B cell (primary cell): ENCODE measurements at regions of chr6 and their contacts with region 1.

Region 1: GRCh38 chr6:73285674-73286283 is 22.8 kb upstream of the KHDC1 start:
- DNase-seq: peak; percentile 13
- ATAC-seq: no peak
- H3K4me3 ChIP-seq: no peak overlapping the region
- H3K4me3 Mint-ChIP-seq: no peak overlapping the region
- H3K27ac ChIP-seq: no peak overlapping the region
- H3K27ac Mint-ChIP-seq: no peak overlapping the region
- H3K4me1 ChIP-seq: no peaks in the 10 kb centered on the region
- H3K4me1 Mint-ChIP-seq: no peaks in the 10 kb centered on the region
- H3K27me3 ChIP-seq: no peaks in the 10 kb centered on the region
- H3K27me3 Mint-ChIP-seq: no peaks in the 10 kb centered on the region
- CTCF ChIP-seq: peak; percentile 22

Region 2: GRCh38 chr6:73264446-73264845 is 21.3 kb before region 1 on chr6:
- CTCF ChIA-PET with region 1: no interaction called
- POLR2A ChIA-PET with region 1: no interaction called
- intact Hi-C with region 1: no loop called
- DNase-seq: no peak
- ATAC-seq: no peak
- H3K4me3 ChIP-seq: no peak overlapping the region
- H3K4me3 Mint-ChIP-seq: peak overlapping the region; percentile 83
- H3K27ac ChIP-seq: no peak overlapping the region
- H3K27ac Mint-ChIP-seq: peak overlapping the region; percentile 24
- H3K4me1 ChIP-seq: peaks cover 5 to 16% of the 10 kb centered on the region in 2 donors
- H3K4me1 Mint-ChIP-seq: peaks cover 18% of the 10 kb centered on the region
- H3K27me3 ChIP-seq: no peaks in the 10 kb centered on the region
- H3K27me3 Mint-ChIP-seq: no peaks in the 10 kb centered on the region
- CTCF ChIP-seq: no peak

Region 3: DNA sequence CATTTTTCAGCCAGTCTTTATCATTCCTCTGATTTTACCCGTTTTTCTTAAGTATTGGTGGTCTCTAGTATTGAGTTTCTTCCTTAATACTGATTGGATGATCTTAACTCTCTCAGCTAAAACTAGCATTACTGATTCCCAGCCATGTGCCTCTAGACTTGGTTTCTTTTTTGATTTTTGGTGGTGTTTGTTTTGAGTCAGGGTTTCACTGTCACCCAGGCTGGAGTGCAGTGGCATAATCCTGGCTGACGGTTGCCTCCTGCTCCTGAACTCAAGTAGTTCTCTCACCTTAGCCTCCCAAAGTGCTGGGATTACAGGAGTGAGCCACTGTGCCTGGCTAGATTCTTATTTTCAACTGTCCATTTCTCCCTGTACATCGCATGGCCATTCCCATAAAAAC is 43.4 kb after region 1 on chr6:
- CTCF ChIA-PET with region 1: interaction called, 82 read pairs
- POLR2A ChIA-PET with region 1: no interaction called
- intact Hi-C with region 1: no loop called
- DNase-seq: no peak
- ATAC-seq: no peak
- H3K4me3 ChIP-seq: no peak overlapping the region
- H3K4me3 Mint-ChIP-seq: no peak overlapping the region
- H3K27ac ChIP-seq: no peak overlapping the region
- H3K27ac Mint-ChIP-seq: no peak overlapping the region
- H3K4me1 ChIP-seq: no peaks in the 10 kb centered on the region
- H3K4me1 Mint-ChIP-seq: no peaks in the 10 kb centered on the region
- H3K27me3 ChIP-seq: peaks cover 0 to 6% (median 0%) of the 10 kb centered on the region in 4 experiments
- H3K27me3 Mint-ChIP-seq: peaks cover 39% of the 10 kb centered on the region
- CTCF ChIP-seq: no peak